Calu3 (cell line): ENCODE measurements at regions of chr1 and their contacts with region 1.

Region 1: DNA sequence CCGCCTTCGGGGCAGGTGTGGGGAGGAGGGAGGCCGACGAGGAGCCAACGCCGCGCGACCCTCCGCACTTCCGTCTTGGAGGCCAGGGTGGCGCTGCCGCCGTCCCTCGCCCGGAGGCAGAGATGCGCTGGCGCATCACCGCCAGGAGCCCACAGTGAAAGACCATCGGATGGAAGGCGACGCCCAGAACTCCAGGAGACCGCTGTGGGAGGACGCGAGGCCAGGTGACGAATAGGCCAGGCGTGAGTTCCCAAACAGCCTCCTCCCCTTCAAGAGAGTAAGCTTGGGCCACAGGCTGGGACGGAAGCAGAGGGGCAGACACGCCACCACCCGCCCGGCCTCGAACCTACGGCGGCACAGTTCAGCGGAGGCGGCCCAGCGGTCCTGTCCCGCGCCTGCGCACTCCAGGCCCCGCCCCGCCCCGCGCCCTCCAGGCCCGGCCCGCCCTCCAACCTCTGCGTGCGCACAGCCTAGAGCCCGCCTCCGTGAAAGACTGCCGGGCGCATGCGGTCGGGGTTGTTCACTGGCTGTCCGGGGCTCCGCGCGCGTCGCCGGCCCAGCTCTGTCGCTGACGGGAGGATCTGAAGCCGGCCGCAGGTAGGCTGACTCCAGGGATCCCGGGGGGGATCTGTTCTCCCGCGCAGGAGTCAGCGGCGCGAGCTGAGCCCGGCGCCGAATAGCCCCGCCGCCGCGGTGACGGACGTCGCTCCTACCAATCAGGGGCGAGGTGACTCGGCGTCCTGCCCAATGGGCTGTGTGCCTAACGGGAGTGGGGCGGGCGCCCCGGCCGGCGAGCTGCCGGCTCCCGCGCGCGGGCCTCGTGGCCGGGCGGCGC is at the start of gene CTPS1:
- DNase-seq: peak; percentile 96
- H3K4me3 Mint-ChIP-seq: peak within 1 kb of the TSS; percentile 87
- H3K27ac Mint-ChIP-seq: peak within 1 kb of the TSS; percentile 85
- H3K4me1 Mint-ChIP-seq: peaks cover 48% of the 10 kb centered on the region
- H3K27me3 Mint-ChIP-seq: no peaks in the 10 kb centered on the region
- CTCF ChIP-seq: no peak
- total RNA-seq, gene CTPS1: 73.2 and 85.9 TPM in 2 replicates

Region 2: GRCh38 chr1:40531381-40532061 is 447.9 kb before region 1 on chr1 and contains the start of gene ZNF684:
- CTCF ChIA-PET with region 1: no interaction called
- intact Hi-C with region 1: loop called (anchors 10 kb)
- DNase-seq: peak; percentile 84
- H3K4me3 Mint-ChIP-seq: peak within 1 kb of the TSS; percentile 81
- H3K27ac Mint-ChIP-seq: peak within 1 kb of the TSS; percentile 89
- H3K4me1 Mint-ChIP-seq: peaks cover 22% of the 10 kb centered on the region
- H3K27me3 Mint-ChIP-seq: no peaks in the 10 kb centered on the region
- CTCF ChIP-seq: no peak
- total RNA-seq, gene ZNF684: 4.5 and 5.1 TPM in 2 replicates

Region 3: GRCh38 chr1:40625066-40625465 is 354.4 kb before region 1 on chr1:
- CTCF ChIA-PET with region 1: no interaction called
- intact Hi-C with region 1: no loop called
- DNase-seq: peak; percentile 66
- H3K4me3 Mint-ChIP-seq: no peak overlapping the region
- H3K27ac Mint-ChIP-seq: no peak overlapping the region
- H3K4me1 Mint-ChIP-seq: no peaks in the 10 kb centered on the region
- H3K27me3 Mint-ChIP-seq: peaks cover 66% of the 10 kb centered on the region
- CTCF ChIP-seq: peak; percentile 33